Activated CD4-positive, alpha-beta T cell treated with anti-CD3 and anti-CD28 coated beads for 36 hours (primary cell): ENCODE measurements at regions of chr2 and their contacts with region 1.

Region 1: GRCh38 chr2:44904578-44904977 is 36.9 kb upstream of the SIX3 start:
- DNase-seq: no peak
- ATAC-seq: no peak
- H3K4me3 Mint-ChIP-seq: no peak overlapping the region
- H3K27ac Mint-ChIP-seq: no peak overlapping the region
- H3K4me1 Mint-ChIP-seq: no peaks in the 10 kb centered on the region
- H3K27me3 Mint-ChIP-seq: peaks cover 35% of the 10 kb centered on the region

Region 2: GRCh38 chr2:44075541-44075940 is 829.0 kb before region 1 on chr2:
- CTCF ChIA-PET with region 1: no interaction called
- POLR2A ChIA-PET with region 1: no interaction called
- intact Hi-C with region 1: no loop called
- DNase-seq: no peak
- ATAC-seq: no peak
- H3K4me3 Mint-ChIP-seq: no peak overlapping the region
- H3K27ac Mint-ChIP-seq: no peak overlapping the region
- H3K4me1 Mint-ChIP-seq: no peaks in the 10 kb centered on the region
- H3K27me3 Mint-ChIP-seq: no peaks in the 10 kb centered on the region

Region 3: GRCh38 chr2:44869761-44870160 is 34.8 kb before region 1 on chr2:
- CTCF ChIA-PET with region 1: no interaction called
- POLR2A ChIA-PET with region 1: no interaction called
- intact Hi-C with region 1: no loop called
- DNase-seq: no peak
- ATAC-seq: no peak
- H3K4me3 Mint-ChIP-seq: no peak overlapping the region
- H3K27ac Mint-ChIP-seq: no peak overlapping the region
- H3K4me1 Mint-ChIP-seq: no peaks in the 10 kb centered on the region
- H3K27me3 Mint-ChIP-seq: peaks cover 22% of the 10 kb centered on the region

Region 4: GRCh38 chr2:44883356-44883755 is 21.2 kb before region 1 on chr2:
- CTCF ChIA-PET with region 1: no interaction called
- POLR2A ChIA-PET with region 1: no interaction called
- intact Hi-C with region 1: loop called in 1 of 2 experiments (anchors 2 kb)
- DNase-seq: no peak
- ATAC-seq: no peak
- H3K4me3 Mint-ChIP-seq: no peak overlapping the region
- H3K27ac Mint-ChIP-seq: no peak overlapping the region
- H3K4me1 Mint-ChIP-seq: no peaks in the 10 kb centered on the region
- H3K27me3 Mint-ChIP-seq: peaks cover 25% of the 10 kb centered on the region